ENCODE measurements at regions of chr16 and their contacts with region 1.

Region 1: DNA sequence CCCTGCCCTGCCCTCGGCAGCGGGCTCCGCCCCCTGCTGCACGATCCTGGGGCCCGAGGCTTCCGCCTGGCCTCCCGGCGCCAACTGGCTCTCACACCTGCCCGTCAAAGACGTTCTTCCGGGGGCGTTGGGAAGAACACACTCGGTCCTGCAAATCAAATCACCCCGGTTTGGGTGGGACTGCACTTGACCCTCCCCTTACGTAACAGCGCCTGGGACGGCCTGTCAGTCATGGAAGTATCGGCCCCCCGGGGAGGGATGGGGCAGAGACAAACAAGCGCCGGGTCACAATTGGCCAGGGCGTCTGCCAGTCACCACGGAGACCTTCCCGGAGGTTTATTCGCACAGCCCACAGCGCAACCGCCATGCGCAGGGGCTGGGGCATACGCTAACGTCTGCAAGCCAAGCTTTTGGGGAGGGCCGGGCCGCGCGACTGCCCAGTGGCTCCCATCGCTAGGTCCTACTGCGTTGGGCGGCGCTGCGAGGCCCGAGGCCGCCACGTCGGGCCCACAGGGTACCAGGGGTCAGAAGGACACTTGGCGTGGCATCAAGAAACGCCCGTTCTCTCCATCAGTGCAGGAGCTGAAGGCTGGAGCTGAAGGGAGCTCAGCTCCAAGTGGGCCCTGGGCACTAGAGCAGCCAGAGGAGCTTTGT is 388 bp upstream of the AKTIP start:
- DNase-seq: peak; percentile 100
- ATAC-seq: peak; percentile 85 to 94 (median 89)
- H3K4me3 ChIP-seq: peak overlapping the region; percentile 86 to 89 (median 89)
- H3K27ac ChIP-seq: peak overlapping the region; percentile 88 to 91 (median 91)
- H3K4me1 ChIP-seq: peaks cover 0 to 25% (median 13%) of the 10 kb centered on the region in 4 donors
- H3K27me3 ChIP-seq: no peaks in the 10 kb centered on the region
- CTCF ChIP-seq: no peak
- POLR2A ChIP-seq: peak; percentile 86

Region 2: DNA sequence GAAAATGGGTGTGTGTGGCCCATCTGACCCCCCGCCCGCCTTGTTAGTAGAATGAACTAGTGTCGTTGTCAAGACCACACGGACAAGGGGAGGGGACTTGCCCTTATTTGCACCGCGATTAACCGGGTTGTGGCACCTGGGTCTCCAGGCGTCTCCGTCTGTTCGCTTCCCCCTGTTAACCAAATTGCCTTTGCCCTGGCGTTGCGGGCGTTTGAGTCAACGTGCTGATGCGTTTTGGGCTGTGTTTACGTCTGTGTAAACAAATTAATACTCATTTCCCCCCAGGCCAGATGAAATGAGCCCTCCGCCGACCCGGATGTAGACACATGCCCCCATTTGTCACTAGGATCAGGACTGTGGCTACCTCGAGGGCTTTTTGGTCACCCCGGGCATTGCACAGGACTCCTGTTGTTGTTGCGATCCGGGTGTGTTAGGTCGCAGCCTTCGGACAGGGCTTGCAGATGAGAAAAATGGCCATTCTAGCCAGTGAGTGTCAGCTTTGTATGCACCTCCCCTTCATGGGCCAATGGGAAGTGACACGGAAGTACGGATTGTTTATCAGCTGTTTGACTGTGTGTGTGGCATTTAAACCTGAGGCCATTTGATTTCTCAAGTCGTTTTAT is 68.2 kb before region 1 on chr16:
- intact Hi-C with region 1: loop called in 1 of 2 experiments (anchors 10 kb)
- DNase-seq: peak; percentile 71 to 93 (median 86)
- ATAC-seq: peak; percentile 87 to 94 (median 89)
- H3K4me3 ChIP-seq: peak overlapping the region; percentile 89 to 95 (median 92)
- H3K27ac ChIP-seq: peak overlapping the region; percentile 94 to 98 (median 98)
- H3K4me1 ChIP-seq: peaks cover 0 to 24% (median 6%) of the 10 kb centered on the region in 4 donors
- H3K27me3 ChIP-seq: no peaks in the 10 kb centered on the region
- CTCF ChIP-seq: no peak
- POLR2A ChIP-seq: peak; percentile 66

Measured in right lobe of liver (tissue), 6 donors.